ENCODE measurements at regions of chr1 and their contacts with region 1.

Region 1: DNA sequence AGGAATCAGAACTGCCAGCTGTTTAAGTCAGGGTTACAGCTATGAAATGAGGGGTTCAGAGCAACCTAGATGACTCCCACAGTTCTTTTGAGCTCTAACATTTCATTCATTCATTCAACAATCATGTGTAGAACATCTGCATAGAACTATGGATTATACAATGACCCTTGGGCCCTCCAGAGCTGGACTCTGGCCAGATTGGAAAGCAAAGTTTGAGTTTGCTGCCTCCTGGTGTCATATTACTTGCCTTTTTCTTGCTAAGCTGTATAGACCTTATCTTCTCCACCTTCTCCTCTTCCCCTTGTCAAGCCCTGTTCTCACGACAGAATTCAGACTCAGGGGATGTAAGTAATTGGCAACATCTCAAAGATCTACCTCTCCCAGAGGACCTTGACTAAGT is 4.0 kb downstream of the CASQ2 start:
- DNase-seq: no peak
- H3K4me3 ChIP-seq: no peak overlapping the region
- H3K27me3 ChIP-seq: peaks cover 3% of the 10 kb centered on the region
- CTCF ChIP-seq: peak; percentile 32; the same call in 1 of the 2 replicates

Region 2: DNA sequence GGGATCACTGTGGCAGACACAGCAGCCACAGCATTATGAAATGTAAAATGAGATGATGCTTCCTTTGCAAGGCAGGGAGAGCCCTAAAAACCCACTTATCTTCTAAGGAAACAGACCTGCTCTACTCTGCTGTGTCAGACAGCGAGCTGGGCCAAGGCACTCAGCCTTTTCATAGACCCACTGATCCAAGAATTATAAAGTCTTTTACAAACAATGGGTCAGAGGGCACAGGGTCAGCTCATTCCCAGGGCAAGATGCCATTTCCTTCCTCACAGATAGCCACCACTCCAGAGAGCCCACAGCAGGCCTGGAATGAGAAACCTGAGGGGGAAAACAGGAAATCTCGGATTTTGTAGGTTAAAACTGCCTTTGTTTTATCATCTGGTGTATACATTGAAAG is 38.9 kb before region 1 on chr1:
- CTCF ChIA-PET with region 1: interaction called, 16 read pairs
- POLR2A ChIA-PET with region 1: no interaction called
- DNase-seq: no peak
- H3K4me3 ChIP-seq: no peak overlapping the region
- H3K27me3 ChIP-seq: no peaks in the 10 kb centered on the region
- CTCF ChIP-seq: no peak

Region 3: GRCh38 chr1:115794976-115795639 is 30.6 kb after region 1 on chr1:
- CTCF ChIA-PET with region 1: no interaction called
- POLR2A ChIA-PET with region 1: no interaction called
- DNase-seq: no peak
- H3K4me3 ChIP-seq: no peak overlapping the region
- H3K27me3 ChIP-seq: peaks cover 3% of the 10 kb centered on the region
- CTCF ChIP-seq: no peak

Region 4: GRCh38 chr1:116075577-116076380 is 311.2 kb after region 1 on chr1:
- CTCF ChIA-PET with region 1: no interaction called
- POLR2A ChIA-PET with region 1: no interaction called
- DNase-seq: peak; percentile 22
- H3K4me3 ChIP-seq: no peak overlapping the region
- H3K27me3 ChIP-seq: no peaks in the 10 kb centered on the region
- CTCF ChIP-seq: no peak